ENCODE measurements at regions of chr2 and their contacts with region 1.

Region 1: GRCh38 chr2:233892793-233893192 is 24.4 kb upstream of the TRPM8 start:
- DNase-seq: no peak
- H3K4me3 ChIP-seq: no peak overlapping the region
- H3K27ac ChIP-seq: no peak overlapping the region
- H3K4me1 ChIP-seq: no peaks in the 10 kb centered on the region
- H3K27me3 ChIP-seq: peaks cover 0 to 10% of the 10 kb centered on the region in 2 donors
- CTCF ChIP-seq: no peak
- POLR2A ChIP-seq: no peak

Region 2: DNA sequence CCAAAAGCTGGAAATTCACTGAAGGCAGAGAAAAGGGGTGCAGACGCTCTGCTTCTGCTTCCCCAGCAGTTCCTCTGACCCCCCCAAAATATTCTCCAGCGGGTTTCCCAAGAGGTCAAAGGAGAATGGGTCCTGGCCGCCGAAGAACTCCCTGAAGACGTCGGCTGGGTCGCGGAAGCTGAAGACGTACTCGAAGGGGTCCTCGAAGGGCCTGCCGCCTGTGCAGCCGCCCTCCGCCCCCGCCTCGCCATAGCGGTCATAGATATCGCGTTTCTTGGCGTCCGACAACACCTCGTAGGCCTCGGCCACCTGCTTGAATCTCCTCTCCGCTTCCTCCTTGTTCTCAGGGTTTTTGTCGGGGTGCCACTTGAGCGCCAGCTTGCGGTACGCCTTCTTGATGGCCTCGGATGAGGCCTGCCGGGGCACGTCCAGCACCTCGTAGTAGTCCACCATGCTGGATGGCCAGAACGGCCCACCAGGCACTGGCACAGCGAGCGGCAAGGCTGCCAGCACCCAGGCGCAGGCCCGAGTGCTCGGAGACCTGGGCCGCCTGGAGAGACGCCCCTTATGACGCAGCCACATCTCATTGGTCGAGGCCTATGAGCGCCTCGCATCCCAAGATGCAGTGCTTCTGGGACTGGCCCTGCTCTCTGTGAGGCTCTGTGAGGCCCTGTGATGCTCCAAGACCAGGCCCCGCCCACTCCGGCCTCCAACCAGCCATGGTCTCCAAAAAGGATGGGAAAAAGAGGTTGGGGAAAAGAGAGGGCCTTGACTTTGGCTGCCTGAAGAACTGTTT is 149.1 kb before region 1 on chr2:
- intact Hi-C with region 1: loop called (anchors 5 kb)
- DNase-seq: no peak
- H3K4me3 ChIP-seq: no peak overlapping the region
- H3K27ac ChIP-seq: no peak overlapping the region
- H3K4me1 ChIP-seq: no peaks in the 10 kb centered on the region
- H3K27me3 ChIP-seq: no peaks in the 10 kb centered on the region
- CTCF ChIP-seq: no peak
- POLR2A ChIP-seq: no peak